ENCODE measurements at regions of chr10 and their contacts with region 1.

Region 1: GRCh38 chr10:71748671-71749191 is 24.6 kb downstream of the VSIR start:
- DNase-seq: peak; percentile 57 to 93 (median 78)
- ATAC-seq: peak; percentile 88
- H3K4me3 ChIP-seq: peak overlapping the region in 1 of 2 experiments; percentile 27
- H3K4me3 Mint-ChIP-seq: peak overlapping the region; percentile 74
- H3K27ac ChIP-seq: peak overlapping the region; percentile 57 to 82
- H3K27ac Mint-ChIP-seq: peak overlapping the region; percentile 93
- H3K4me1 ChIP-seq: peaks cover 100% of the 10 kb centered on the region
- H3K4me1 Mint-ChIP-seq: peaks cover 96% of the 10 kb centered on the region
- H3K27me3 ChIP-seq: no peaks in the 10 kb centered on the region
- H3K27me3 Mint-ChIP-seq: no peaks in the 10 kb centered on the region
- CTCF ChIP-seq: no peak

Region 2: DNA sequence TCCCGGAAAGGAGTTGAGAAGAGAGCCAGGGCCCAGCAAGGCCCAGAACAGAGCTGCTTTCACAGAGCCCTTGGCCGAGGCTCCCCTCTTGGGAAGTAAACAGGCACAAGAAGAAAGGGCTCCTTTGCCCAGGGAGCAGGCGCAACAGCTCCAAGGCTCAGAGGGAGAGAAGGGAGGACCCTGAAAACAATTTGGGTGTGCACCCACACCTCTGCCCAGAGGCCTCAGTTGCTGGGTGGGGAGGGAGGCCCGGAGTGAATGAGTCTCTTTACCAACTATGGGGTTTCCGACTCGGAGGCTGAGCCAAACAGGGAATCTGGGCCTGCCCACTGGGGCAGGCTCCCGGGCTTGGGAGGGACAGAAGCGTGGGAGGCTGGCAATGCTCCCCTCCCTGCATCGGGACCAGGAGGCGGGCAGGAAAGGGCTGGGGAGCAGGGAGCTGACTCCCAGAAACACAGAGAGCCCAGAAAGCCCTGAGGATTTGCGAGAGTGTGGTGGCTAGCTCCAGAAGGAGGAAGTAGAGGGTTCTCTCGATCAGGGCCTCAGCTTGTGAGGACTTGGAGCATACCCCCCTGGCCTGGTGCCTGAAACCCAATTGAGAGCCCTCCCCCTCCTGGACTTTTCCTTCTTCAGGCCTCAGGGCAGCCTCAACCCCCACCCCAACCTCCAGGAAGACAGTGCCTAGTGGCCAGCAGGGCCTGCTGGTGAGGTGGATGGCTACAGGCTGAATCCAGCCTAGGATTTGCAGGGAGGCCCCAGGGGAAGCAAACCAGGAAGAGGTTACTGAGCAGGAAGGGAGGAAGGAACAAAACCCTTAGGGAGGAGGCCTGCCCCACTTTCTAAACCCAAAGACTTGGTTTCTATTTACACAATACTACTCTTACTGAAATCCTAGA is 35.3 kb before region 1 on chr10:
- CTCF ChIA-PET with region 1: interaction called, 26 read pairs
- POLR2A ChIA-PET with region 1: interaction called, 11 read pairs
- intact Hi-C with region 1: loop called in 1 of 2 experiments (anchors 5 kb)
- DNase-seq: peak in 5 of 9 experiments; percentile 20 to 76 (median 39)
- ATAC-seq: peak; percentile 57
- H3K4me3 ChIP-seq: peak overlapping the region; percentile 21 to 24
- H3K4me3 Mint-ChIP-seq: peak overlapping the region; percentile 81
- H3K27ac ChIP-seq: peak overlapping the region; percentile 77 to 92
- H3K27ac Mint-ChIP-seq: peak overlapping the region; percentile 98
- H3K4me1 ChIP-seq: peaks cover 67% of the 10 kb centered on the region
- H3K4me1 Mint-ChIP-seq: peaks cover 72% of the 10 kb centered on the region
- H3K27me3 ChIP-seq: no peaks in the 10 kb centered on the region
- H3K27me3 Mint-ChIP-seq: no peaks in the 10 kb centered on the region
- CTCF ChIP-seq: no peak

Region 3: DNA sequence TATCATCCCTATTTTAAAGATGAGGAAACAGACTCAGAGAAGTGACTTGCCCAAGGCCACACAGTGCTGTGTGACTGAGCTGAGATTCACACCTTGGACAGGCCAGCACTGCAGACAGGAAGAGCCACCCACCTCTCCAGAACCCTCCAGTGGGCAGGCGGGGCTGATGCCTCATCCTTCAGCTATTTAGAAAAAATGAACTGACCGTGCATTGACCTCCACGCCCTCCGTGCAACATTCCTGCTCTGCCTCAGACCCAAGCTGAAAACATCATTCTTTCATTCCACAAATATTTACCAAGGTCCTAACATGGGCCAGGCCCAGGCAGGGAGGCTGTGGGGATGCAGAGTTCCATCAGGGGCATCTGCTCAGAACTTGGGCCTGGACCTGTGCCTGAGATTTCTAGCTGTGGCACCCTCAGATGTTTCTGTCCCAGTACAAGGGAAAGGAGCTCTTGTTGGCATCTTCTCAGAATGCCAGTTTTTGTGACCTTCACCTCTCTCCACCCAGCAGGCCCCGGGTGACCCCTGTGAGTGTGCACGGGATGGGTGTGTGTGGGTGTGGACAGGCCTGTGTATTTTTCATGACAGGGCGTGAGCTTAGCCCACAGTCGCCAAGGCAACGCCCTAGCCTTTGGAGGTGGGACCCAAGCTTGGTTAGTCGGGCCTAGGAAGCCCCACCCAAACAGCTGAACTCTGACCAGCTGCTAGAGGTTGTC is 18.1 kb after region 1 on chr10:
- CTCF ChIA-PET with region 1: interaction called, 114 read pairs
- POLR2A ChIA-PET with region 1: interaction called, 300 read pairs
- intact Hi-C with region 1: loop called (anchors 2 kb)
- DNase-seq: peak in 3 of 9 experiments; percentile 55 to 64 (median 57)
- ATAC-seq: no peak
- H3K4me3 ChIP-seq: peak overlapping the region in 1 of 2 experiments; percentile 13
- H3K4me3 Mint-ChIP-seq: peak overlapping the region; percentile 70
- H3K27ac ChIP-seq: peak overlapping the region; percentile 17 to 89
- H3K27ac Mint-ChIP-seq: peak overlapping the region; percentile 96
- H3K4me1 ChIP-seq: peaks cover 92% of the 10 kb centered on the region
- H3K4me1 Mint-ChIP-seq: peaks cover 93% of the 10 kb centered on the region
- H3K27me3 ChIP-seq: no peaks in the 10 kb centered on the region
- H3K27me3 Mint-ChIP-seq: no peaks in the 10 kb centered on the region
- CTCF ChIP-seq: no peak

Measured in CD8-positive, alpha-beta T cell (primary cell).